Psoas muscle (tissue), 8 donors: ENCODE measurements at regions of chr7 and their contacts with region 1.

Region 1: GRCh38 chr7:36670585-36671431 is 53.5 kb downstream of the AOAH start:
- DNase-seq: peak in 1 of 2 donors; percentile 56
- ATAC-seq: peak in 2 of 4 donors; percentile 43 to 47
- H3K4me3 ChIP-seq: no peak overlapping the region
- H3K27ac ChIP-seq: no peak overlapping the region
- H3K4me1 ChIP-seq: no peaks in the 10 kb centered on the region
- H3K27me3 ChIP-seq: peaks cover 0 to 3% (median 0%) of the 10 kb centered on the region in 3 donors
- CTCF ChIP-seq: peak; percentile 60

Region 2: GRCh38 chr7:36487756-36488336 is 183.0 kb before region 1 on chr7:
- intact Hi-C with region 1: loop called in 1 of 2 experiments (anchors 10 kb)
- DNase-seq: no peak
- ATAC-seq: peak in 1 of 4 donors; percentile 49
- H3K4me3 ChIP-seq: no peak overlapping the region
- H3K27ac ChIP-seq: no peak overlapping the region
- H3K4me1 ChIP-seq: no peaks in the 10 kb centered on the region
- H3K27me3 ChIP-seq: no peaks in the 10 kb centered on the region
- CTCF ChIP-seq: peak; percentile 58

Region 3: DNA sequence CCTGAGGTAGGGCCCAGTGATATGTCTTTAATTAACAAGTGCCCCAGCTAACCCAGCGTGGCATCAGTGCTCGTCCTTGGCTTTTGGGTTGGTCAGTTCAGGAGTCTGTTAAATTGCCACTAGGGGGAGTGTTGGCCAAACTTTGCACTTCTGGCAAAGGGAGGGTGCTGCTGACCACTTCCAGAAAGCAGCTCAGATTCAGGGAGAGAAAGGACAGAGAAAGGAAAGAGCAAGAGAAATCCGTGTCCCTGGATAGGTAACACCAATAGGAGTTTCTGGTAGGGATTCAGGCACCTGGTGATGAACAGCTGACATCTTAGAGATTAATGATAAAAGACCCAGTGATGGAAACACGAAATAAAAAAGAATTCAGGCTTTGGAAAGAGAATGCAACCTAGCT is 296.6 kb after region 1 on chr7:
- intact Hi-C with region 1: no loop called
- DNase-seq: peak in 1 of 2 donors; percentile 36
- ATAC-seq: peak; percentile 75 to 93 (median 85)
- H3K4me3 ChIP-seq: no peak overlapping the region
- H3K27ac ChIP-seq: no peak overlapping the region
- H3K4me1 ChIP-seq: peaks cover 3% of the 10 kb centered on the region
- H3K27me3 ChIP-seq: no peaks in the 10 kb centered on the region
- CTCF ChIP-seq: peak; percentile 81